ENCODE measurements at regions of chr12 and their contacts with region 1.

Region 1: DNA sequence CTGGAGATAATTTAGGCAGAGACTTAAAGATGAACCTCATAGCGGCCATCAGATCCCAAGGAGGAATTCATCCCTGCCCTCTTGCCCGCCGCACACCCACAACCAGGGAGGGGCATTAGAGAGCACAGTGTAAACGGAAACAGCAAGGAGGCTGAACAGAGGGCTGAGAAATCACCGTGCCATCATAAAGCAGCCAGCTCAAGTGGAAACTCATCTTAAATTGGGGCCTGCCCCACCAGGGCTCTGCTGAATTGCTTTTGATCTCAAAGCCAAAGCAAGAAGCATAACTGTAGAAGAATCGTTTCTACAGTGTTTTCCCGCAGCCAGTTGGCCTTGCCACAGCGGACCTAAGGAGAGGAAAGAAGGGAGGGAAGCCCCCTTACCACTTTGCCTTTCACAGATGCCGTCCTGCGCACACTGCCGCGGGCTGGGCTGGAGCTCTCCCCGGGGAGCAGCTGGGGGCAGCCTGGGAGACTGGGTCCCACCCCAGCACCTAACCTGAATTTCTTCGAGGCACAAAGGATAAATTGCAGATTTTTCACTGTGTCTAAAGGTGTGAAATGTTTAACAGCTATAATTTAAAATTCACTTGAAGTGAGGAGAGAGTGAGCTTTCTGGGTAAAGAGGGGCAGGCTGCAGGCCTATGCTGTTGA is 51.8 kb upstream of the MMP17 start:
- DNase-seq: peak; percentile 49
- ATAC-seq: peak; percentile 87
- H3K4me3 Mint-ChIP-seq: no peak overlapping the region
- H3K27ac Mint-ChIP-seq: peak overlapping the region; percentile 75
- H3K4me1 Mint-ChIP-seq: peaks cover 32% of the 10 kb centered on the region
- H3K27me3 Mint-ChIP-seq: no peaks in the 10 kb centered on the region
- CTCF ChIP-seq: no peak

Region 2: DNA sequence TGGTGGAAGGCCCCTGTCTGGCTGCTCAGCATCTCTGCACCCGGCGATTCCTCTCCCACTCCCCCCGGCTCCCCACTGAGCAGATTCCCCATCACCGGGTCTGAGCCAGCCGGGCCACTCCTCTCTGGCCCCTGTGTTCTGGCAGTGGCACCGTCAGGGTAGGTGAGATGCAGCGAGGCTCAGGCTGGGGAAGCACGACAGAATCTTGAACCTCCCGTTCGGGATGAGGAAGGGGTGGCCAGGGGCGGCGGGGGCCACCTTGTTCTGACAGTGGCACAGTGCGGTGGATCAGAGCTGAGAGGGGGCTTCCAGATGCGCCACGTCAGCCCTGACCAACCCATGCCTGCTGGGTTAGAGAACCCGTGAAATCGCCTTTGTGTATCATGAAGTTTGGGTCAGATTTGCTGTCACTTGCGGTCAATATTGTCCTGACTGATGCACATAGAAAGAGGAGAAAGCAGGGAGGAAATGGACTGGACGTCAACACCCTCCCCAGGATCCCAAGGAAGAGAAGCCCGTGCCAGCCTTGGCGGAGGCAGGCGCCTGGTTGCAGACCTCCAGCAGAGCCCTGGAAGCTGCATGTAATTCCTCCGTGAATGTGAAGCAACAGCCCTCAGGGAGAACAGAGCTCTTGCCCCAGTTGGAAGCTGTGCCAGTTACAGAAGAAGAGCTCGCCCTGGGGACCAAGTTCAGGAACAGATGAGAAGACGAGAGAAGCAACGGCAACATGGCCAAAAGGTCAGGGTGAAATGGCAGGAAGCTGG is 202.6 kb before region 1 on chr12:
- CTCF ChIA-PET with region 1: no interaction called
- POLR2A ChIA-PET with region 1: no interaction called
- intact Hi-C with region 1: no loop called
- DNase-seq: no peak
- ATAC-seq: no peak
- H3K4me3 Mint-ChIP-seq: no peak overlapping the region
- H3K27ac Mint-ChIP-seq: no peak overlapping the region
- H3K4me1 Mint-ChIP-seq: no peaks in the 10 kb centered on the region
- H3K27me3 Mint-ChIP-seq: peaks cover 7% of the 10 kb centered on the region
- CTCF ChIP-seq: no peak

Region 3: DNA sequence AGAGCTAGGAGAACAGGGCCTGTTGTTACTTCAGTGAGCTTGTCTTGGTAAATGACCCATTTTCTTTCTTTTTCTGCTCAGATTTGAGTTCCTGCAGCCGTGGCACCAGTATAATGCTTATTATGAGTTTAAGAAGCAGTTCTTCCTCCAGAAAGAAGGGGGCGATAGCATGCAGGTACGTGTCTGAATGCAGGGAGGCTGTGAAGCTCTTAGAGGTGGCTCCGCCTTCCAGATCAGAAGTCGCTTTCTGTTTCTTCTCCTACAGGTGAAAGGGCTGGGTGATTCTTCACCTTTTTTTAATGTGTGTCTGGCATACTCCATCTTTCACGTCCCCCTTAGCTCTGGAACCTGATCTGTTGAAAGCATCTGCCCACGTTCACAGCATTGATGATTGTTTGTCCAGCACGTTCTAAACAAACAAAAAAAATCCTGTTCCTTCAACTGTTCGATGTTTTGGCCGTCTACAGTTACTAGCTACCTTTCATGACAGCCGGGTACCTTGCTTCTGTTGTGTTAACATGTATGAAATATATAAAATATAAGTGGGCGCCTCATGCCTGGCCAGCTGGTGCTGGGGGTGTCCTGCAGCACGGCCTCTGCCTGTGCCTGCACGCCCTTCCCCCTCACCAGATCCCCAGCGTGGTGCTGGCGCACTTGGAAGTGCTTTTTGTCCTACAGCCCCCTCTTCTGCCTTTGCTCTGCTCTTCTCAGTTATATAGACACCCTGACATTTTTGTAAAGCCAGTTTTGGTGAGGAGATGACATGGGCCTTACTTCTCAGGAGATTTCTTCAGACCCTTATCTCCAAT is 20.9 kb before region 1 on chr12:
- CTCF ChIA-PET with region 1: interaction called, 10 read pairs
- POLR2A ChIA-PET with region 1: interaction called, 3 read pairs
- intact Hi-C with region 1: no loop called
- DNase-seq: peak; percentile 53
- ATAC-seq: peak; percentile 92
- H3K4me3 Mint-ChIP-seq: no peak overlapping the region
- H3K27ac Mint-ChIP-seq: peak overlapping the region; percentile 36
- H3K4me1 Mint-ChIP-seq: no peaks in the 10 kb centered on the region
- H3K27me3 Mint-ChIP-seq: no peaks in the 10 kb centered on the region
- CTCF ChIP-seq: peak; percentile 56